ENCODE measurements at regions of chr16 and their contacts with region 1.

Region 1: DNA sequence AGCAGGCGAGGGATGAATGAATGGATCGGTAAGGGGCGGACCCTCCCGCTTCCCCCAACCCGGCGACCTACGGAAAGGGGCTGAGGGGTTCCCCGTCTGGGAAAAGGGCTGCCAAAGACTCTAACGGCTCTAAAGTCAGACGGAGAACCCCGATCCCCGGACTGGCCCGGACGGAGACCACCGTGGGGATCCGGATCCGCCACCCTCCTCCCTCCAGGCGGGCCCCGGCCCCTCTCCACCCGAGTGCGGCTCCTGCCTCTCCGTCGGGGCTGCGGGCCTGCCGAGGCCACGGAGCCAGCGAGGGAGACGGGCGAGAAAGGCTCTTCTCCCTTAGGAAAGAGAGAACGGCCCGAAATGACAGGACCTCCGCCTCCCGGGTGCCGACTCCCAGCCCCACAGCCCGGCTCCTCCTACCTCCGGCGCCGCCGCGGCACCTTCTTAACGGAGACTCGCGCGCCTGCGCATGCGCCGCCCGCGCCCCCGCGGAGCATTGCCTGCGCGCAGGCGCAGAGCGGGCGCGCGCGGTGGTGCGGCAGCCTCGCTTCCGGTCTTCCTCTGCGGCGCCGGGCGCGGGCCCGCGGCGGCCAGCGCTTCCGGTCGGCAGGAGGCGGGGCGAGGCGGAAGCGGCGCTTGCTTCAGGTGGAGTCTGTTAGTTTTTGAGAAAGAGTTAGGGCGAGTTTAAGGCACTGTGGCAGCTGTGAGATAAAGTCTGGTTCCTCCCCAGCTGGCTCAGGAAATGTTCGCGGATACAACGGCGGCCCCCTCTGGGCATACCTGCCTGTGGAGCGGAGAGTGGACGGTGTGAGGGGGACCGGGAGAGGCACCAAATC is at the start of gene SLX4:
- DNase-seq: peak; percentile 93
- H3K4me3 Mint-ChIP-seq: peak within 1 kb of the TSS; percentile 98
- H3K27ac Mint-ChIP-seq: peak within 1 kb of the TSS; percentile 97
- H3K4me1 Mint-ChIP-seq: peaks cover 52% of the 10 kb centered on the region
- H3K27me3 Mint-ChIP-seq: no peaks in the 10 kb centered on the region
- total RNA-seq, gene SLX4: 10.3 and 10.8 TPM in 2 replicates

Region 2: GRCh38 chr16:3113765-3114479 is 497.4 kb before region 1 on chr16:
- intact Hi-C with region 1: no loop called
- DNase-seq: no peak
- H3K4me3 Mint-ChIP-seq: no peak overlapping the region
- H3K27ac Mint-ChIP-seq: no peak overlapping the region
- H3K4me1 Mint-ChIP-seq: no peaks in the 10 kb centered on the region
- H3K27me3 Mint-ChIP-seq: peaks cover 15% of the 10 kb centered on the region

Region 3: DNA sequence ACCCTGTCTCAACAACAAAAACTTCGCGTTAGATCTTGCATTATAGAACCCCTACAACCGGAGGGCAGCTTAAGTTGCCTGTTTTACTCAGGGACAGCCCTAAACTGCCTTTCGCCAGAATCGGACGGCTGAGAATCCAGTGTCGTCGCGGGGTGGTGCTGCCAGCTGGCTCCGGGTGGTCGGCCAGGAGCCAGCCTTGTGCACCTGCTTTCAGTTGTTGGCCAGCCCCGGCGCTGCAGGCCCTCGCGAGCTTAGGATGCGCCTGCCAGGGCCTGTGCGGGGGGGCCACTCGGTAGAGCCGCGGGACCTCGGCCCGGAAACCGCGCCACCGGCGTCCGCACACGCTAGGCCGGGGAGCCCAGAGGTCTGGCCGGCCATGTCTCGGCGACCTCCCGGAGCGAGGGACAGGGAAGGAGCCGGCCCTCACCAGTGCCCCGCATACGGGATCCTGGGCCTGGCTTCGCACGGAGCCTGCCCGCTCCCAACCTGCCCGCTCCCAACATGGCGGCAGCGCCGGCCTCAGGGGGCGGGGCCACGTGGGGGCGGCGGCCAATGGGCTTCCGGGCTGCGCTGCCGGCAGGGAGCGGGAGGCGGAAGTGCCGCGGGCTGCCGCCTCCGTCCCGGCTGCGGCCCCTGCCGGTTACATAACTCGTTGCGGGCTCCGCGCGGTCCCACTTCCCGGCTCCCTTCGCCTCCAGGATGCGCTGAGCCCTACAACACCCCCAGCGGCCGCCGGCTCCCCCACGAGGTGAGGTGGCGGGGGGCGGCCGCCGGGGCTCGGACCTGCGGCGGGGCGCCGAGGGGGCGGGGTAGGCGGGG is 153.7 kb before region 1 on chr16:
- intact Hi-C with region 1: loop called (anchors 2 kb)
- DNase-seq: peak; percentile 88
- H3K4me3 Mint-ChIP-seq: peak overlapping the region; percentile 83
- H3K27ac Mint-ChIP-seq: peak overlapping the region; percentile 77
- H3K4me1 Mint-ChIP-seq: peaks cover 42% of the 10 kb centered on the region
- H3K27me3 Mint-ChIP-seq: no peaks in the 10 kb centered on the region

Region 4: GRCh38 chr16:3525951-3526350 is 85.4 kb before region 1 on chr16:
- intact Hi-C with region 1: loop called (anchors 2 kb)
- DNase-seq: no peak
- H3K4me3 Mint-ChIP-seq: no peak overlapping the region
- H3K27ac Mint-ChIP-seq: no peak overlapping the region
- H3K4me1 Mint-ChIP-seq: peaks cover 8% of the 10 kb centered on the region
- H3K27me3 Mint-ChIP-seq: no peaks in the 10 kb centered on the region

Region 5: DNA sequence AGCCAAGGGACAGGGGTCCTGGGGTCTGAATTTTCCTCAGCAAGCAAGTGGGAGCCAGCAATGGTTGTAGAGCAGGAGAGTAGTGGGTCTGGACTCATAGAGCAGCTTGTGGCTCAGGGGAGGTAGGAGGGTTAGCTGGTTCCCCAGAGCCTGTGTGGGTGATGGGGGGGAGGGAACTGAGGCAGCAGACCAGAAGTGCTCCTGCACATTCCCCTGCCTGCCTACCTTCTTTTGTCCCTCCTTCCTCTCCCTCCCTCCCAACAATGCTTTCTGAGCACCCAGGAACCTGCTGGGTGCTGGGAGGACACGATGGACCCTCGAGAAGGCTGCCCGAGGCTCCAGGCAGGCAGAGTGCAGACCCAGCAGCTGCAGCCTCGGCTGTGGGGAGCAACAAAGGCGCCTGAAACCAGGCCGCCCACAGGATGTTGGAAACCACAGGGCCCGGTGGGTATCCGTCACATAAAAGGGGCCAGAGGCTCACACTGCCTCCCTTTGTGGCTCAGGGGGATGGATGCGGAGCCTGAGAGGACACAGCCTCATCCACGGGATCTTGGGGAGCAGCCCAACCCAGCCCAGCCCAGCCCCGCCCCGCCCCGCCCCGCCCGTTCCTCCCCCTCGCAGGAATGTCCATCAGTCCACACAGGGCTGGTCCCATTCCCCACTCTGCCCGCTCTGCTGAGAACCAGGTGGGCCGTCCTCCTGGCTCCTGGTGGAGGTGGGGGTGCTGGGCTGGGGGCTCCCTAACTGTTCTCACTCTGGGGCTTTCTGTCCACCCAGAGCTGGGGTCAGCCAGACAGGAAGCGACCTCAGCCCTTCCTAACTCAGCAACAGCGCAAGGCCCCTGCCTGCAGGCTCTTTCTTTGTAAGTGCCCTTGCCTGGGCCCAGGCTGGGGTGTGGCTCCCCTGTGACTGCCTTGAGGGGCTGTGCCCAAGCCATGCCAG is 32.5 kb before region 1 on chr16:
- intact Hi-C with region 1: loop called (anchors 1 kb)
- DNase-seq: peak; percentile 65
- H3K4me3 Mint-ChIP-seq: peak overlapping the region; percentile 96
- H3K27ac Mint-ChIP-seq: peak overlapping the region; percentile 93
- H3K4me1 Mint-ChIP-seq: peaks cover 52% of the 10 kb centered on the region
- H3K27me3 Mint-ChIP-seq: no peaks in the 10 kb centered on the region

Region 6: GRCh38 chr16:3717235-3718018 is 106.1 kb after region 1 on chr16 and contains the start of gene TRAP1:
- intact Hi-C with region 1: loop called (anchors 2 kb)
- DNase-seq: peak; percentile 87
- H3K4me3 Mint-ChIP-seq: peak within 1 kb of the TSS; percentile 91
- H3K27ac Mint-ChIP-seq: peak within 1 kb of the TSS; percentile 90
- H3K4me1 Mint-ChIP-seq: peaks cover 33% of the 10 kb centered on the region
- H3K27me3 Mint-ChIP-seq: peaks cover 2% of the 10 kb centered on the region
- total RNA-seq, gene TRAP1: 351 and 353 TPM in 2 replicates